Thyroid gland (tissue), 4 donors: ENCODE measurements at regions of chr14 and their contacts with region 1.

Region 1: GRCh38 chr14:73472185-73473114 is 14.1 kb upstream of the NUMB start:
- DNase-seq: no peak
- H3K4me3 ChIP-seq: no peak overlapping the region
- H3K27ac ChIP-seq: no peak overlapping the region
- H3K4me1 ChIP-seq: no peaks in the 10 kb centered on the region
- H3K27me3 ChIP-seq: no peaks in the 10 kb centered on the region
- CTCF ChIP-seq: peak; percentile 30 to 85 (median 74)
- POLR2A ChIP-seq: no peak

Region 2: DNA sequence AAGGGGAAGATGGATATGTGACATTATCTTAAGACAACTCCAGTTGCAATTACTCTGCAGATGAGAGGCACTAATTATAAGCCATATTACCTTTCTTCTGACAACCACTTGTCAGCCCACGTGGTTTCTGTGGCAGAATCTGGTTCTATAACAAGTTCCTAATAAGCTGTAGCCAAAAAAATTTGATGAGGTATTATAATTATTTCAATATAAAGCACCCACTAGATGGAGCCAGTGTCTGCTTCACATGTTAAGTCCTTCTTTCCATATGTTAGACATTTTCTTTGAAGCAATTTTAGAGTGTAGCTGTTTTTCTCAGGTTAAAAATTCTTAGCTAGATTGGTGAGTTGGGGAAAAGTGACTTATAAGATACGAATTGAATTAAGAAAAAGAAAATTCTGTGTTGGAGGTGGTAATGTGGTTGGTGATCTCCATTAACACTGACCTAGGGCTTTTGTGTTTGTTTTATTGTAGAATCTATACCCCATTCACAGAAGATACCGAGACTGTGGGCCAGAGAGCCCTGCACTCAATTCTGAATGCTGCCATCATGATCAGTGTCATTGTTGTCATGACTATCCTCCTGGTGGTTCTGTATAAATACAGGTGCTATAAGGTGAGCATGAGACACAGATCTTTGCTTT is 299.2 kb before region 1 on chr14:
- intact Hi-C with region 1: loop called (anchors 5 kb)
- DNase-seq: no peak
- H3K4me3 ChIP-seq: no peak overlapping the region
- H3K27ac ChIP-seq: no peak overlapping the region
- H3K4me1 ChIP-seq: peaks cover 0 to 7% of the 10 kb centered on the region in 2 donors
- H3K27me3 ChIP-seq: no peaks in the 10 kb centered on the region
- CTCF ChIP-seq: peak in 5 of 6 experiments; percentile 15 to 58 (median 41)
- POLR2A ChIP-seq: no peak

Region 3: GRCh38 chr14:73295198-73295796 is 177.2 kb before region 1 on chr14:
- intact Hi-C with region 1: loop called (anchors 5 kb)
- DNase-seq: no peak
- H3K4me3 ChIP-seq: no peak overlapping the region
- H3K27ac ChIP-seq: no peak overlapping the region
- H3K4me1 ChIP-seq: no peaks in the 10 kb centered on the region
- H3K27me3 ChIP-seq: no peaks in the 10 kb centered on the region
- CTCF ChIP-seq: peak; percentile 30 to 75 (median 56)
- POLR2A ChIP-seq: no peak

Region 4: DNA sequence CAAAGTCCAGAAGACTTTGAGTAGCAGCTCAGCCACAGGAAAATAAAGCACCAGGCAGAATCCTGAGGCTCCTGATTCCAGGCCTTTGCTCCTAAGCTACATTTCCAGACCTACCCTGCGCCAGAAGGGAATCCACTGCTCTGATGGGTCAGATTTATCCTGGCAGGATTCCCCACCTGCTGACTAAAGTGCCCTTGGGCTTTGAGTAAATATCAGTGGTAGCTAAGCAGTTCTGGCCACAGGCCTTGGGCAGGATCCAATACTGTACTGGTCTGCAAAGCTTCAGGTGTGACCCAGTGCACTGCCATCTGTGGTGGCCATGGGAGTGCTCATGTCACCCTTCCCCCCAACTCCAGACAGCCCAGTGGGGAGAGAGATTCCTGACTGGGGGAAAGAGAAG is 54.1 kb after region 1 on chr14:
- intact Hi-C with region 1: no loop called
- DNase-seq: peak; percentile 81 to 87
- H3K4me3 ChIP-seq: no peak overlapping the region
- H3K27ac ChIP-seq: peak overlapping the region in 2 of 3 donors; percentile 21 to 49
- H3K4me1 ChIP-seq: peaks cover 4 to 15% of the 10 kb centered on the region in 2 donors
- H3K27me3 ChIP-seq: no peaks in the 10 kb centered on the region
- CTCF ChIP-seq: no peak
- POLR2A ChIP-seq: no peak